Dendritic cell treated with granulocyte-macrophage colony-stimulating factor and Interleukin-4, amounts not matched to agents 40 ng/mL and 50 ng/mL, for 4 days (primary cell): ENCODE measurements at regions of chr4 and their contacts with region 1.

Region 1: DNA sequence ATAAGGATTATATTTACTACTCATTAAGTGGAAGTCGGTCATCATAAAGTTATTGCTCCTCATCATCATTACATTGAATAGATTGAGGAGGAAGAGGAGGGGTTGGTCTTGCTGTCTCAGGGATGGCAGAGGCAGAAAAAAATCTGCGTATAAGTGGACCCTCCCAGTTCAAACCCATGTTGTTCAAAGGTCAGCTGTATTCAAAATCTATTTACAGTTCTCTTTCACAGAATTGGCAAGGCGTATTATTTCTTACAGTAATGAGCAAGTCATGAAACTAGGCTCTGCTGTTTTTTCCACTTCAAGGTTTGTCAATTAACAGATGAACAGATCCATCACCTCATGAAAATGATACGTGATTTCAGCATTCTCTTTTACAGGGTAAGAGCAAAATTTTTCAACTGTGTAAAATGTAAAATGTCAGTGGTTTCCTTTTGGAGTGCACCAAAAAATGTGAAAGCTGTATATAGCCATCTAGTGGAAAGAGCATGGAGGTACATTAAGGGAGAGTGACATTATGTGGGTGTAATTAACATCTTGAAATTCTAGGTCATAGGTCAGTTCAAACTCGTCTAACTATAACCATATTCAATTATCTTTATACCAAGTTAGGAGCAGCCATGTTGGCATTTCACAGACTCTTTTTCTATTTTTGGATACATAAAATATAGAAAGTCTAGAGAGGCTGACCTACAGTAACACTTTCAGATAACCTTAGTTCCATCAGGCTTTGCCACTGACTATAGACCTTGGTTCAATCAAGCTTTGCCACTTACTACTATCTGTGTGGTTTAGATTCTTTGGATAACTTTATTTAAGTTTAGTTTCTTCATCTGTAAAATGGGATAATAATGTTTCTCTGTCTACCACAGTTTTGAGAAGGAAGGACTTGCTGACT is 30.1 kb downstream of the NEIL3 start:
- H3K4me3 Mint-ChIP-seq: no peak overlapping the region
- H3K27ac Mint-ChIP-seq: no peak overlapping the region
- H3K4me1 Mint-ChIP-seq: no peaks in the 10 kb centered on the region
- H3K27me3 Mint-ChIP-seq: no peaks in the 10 kb centered on the region

Region 2: GRCh38 chr4:177250056-177250696 is 89.5 kb before region 1 on chr4:
- intact Hi-C with region 1: loop called (anchors 1 kb)
- H3K4me3 Mint-ChIP-seq: no peak overlapping the region
- H3K27ac Mint-ChIP-seq: no peak overlapping the region
- H3K4me1 Mint-ChIP-seq: peaks cover 13% of the 10 kb centered on the region
- H3K27me3 Mint-ChIP-seq: peaks cover 7% of the 10 kb centered on the region